ENCODE measurements at regions of chr13 and their contacts with region 1.

Region 1: GRCh38 chr13:97432917-97433726 is 847 bp upstream of the RAP2A start:
- DNase-seq: peak; percentile 100
- ATAC-seq: peak; percentile 68
- H3K4me3 ChIP-seq: peak overlapping the region; percentile 73 to 100 (median 94)
- H3K4me3 Mint-ChIP-seq: peak overlapping the region; percentile 99
- H3K27ac ChIP-seq: peak overlapping the region; percentile 93 to 100
- H3K27ac Mint-ChIP-seq: peak overlapping the region; percentile 99
- H3K4me1 ChIP-seq: peaks cover 9 to 11% of the 10 kb centered on the region in 2 donors
- H3K4me1 Mint-ChIP-seq: peaks cover 30% of the 10 kb centered on the region
- H3K27me3 ChIP-seq: no peaks in the 10 kb centered on the region
- H3K27me3 Mint-ChIP-seq: no peaks in the 10 kb centered on the region
- CTCF ChIP-seq: no peak

Region 2: GRCh38 chr13:97221989-97222700 is 211.0 kb before region 1 on chr13 and contains the start of gene MBNL2:
- CTCF ChIA-PET with region 1: no interaction called
- POLR2A ChIA-PET with region 1: interaction called, 3 read pairs
- intact Hi-C with region 1: loop called (anchors 2 kb)
- DNase-seq: peak; percentile 90
- ATAC-seq: peak; percentile 95
- H3K4me3 ChIP-seq: peak within 1 kb of the TSS; percentile 69 to 97 (median 78)
- H3K4me3 Mint-ChIP-seq: peak within 1 kb of the TSS; percentile 94
- H3K27ac ChIP-seq: peak within 1 kb of the TSS; percentile 88 to 95
- H3K27ac Mint-ChIP-seq: peak within 1 kb of the TSS; percentile 93
- H3K4me1 ChIP-seq: peaks cover 40% of the 10 kb centered on the region in 2 donors
- H3K4me1 Mint-ChIP-seq: peaks cover 44% of the 10 kb centered on the region
- H3K27me3 ChIP-seq: no peaks in the 10 kb centered on the region
- H3K27me3 Mint-ChIP-seq: no peaks in the 10 kb centered on the region
- CTCF ChIP-seq: no peak
- total RNA-seq, gene MBNL2: 50.1 and 51.2 TPM in 2 replicates

Region 3: GRCh38 chr13:98509271-98510155 is 1076.4 kb after region 1 on chr13:
- CTCF ChIA-PET with region 1: no interaction called
- POLR2A ChIA-PET with region 1: no interaction called
- intact Hi-C with region 1: loop called (anchors 10 kb)
- DNase-seq: peak; percentile 81
- ATAC-seq: peak; percentile 81
- H3K4me3 ChIP-seq: peak overlapping the region in 3 of 5 experiments; percentile 2 to 49 (median 18)
- H3K4me3 Mint-ChIP-seq: peak overlapping the region; percentile 69
- H3K27ac ChIP-seq: peak overlapping the region; percentile 80 to 94
- H3K27ac Mint-ChIP-seq: peak overlapping the region; percentile 97
- H3K4me1 ChIP-seq: peaks cover 80 to 94% of the 10 kb centered on the region in 2 donors
- H3K4me1 Mint-ChIP-seq: peaks cover 98% of the 10 kb centered on the region
- H3K27me3 ChIP-seq: no peaks in the 10 kb centered on the region
- H3K27me3 Mint-ChIP-seq: no peaks in the 10 kb centered on the region
- CTCF ChIP-seq: no peak

Region 4: GRCh38 chr13:99087096-99087953 is 1654.2 kb after region 1 on chr13:
- CTCF ChIA-PET with region 1: no interaction called
- POLR2A ChIA-PET with region 1: no interaction called
- intact Hi-C with region 1: loop called (anchors 5 kb)
- DNase-seq: peak; percentile 94
- ATAC-seq: peak; percentile 74
- H3K4me3 ChIP-seq: peak overlapping the region; percentile 65 to 89 (median 88)
- H3K4me3 Mint-ChIP-seq: peak overlapping the region; percentile 100
- H3K27ac ChIP-seq: peak overlapping the region; percentile 82 to 92
- H3K27ac Mint-ChIP-seq: peak overlapping the region; percentile 99
- H3K4me1 ChIP-seq: peaks cover 26 to 27% of the 10 kb centered on the region in 2 donors
- H3K4me1 Mint-ChIP-seq: peaks cover 32% of the 10 kb centered on the region
- H3K27me3 ChIP-seq: peaks cover 0 to 3% (median 0%) of the 10 kb centered on the region in 4 experiments
- H3K27me3 Mint-ChIP-seq: peaks cover 5% of the 10 kb centered on the region
- CTCF ChIP-seq: peak; percentile 42

Measured in B cell (primary cell).